Activated CD4-positive, alpha-beta T cell treated with anti-CD3 and anti-CD28 coated beads for 36 hours (primary cell): ENCODE measurements at regions of chr11 and their contacts with region 1.

Region 1: GRCh38 chr11:61695917-61696316 is 15.7 kb downstream of the DAGLA start:
- DNase-seq: peak; percentile 97
- ATAC-seq: peak; percentile 100
- H3K4me3 Mint-ChIP-seq: peak overlapping the region; percentile 21
- H3K27ac Mint-ChIP-seq: peak overlapping the region; percentile 86
- H3K4me1 Mint-ChIP-seq: peaks cover 27% of the 10 kb centered on the region
- H3K27me3 Mint-ChIP-seq: no peaks in the 10 kb centered on the region

Region 2: GRCh38 chr11:61567286-61568061 is 128.4 kb before region 1 on chr11:
- CTCF ChIA-PET with region 1: no interaction called
- POLR2A ChIA-PET with region 1: no interaction called
- intact Hi-C with region 1: no loop called
- DNase-seq: peak; percentile 86
- ATAC-seq: peak; percentile 91
- H3K4me3 Mint-ChIP-seq: no peak overlapping the region
- H3K27ac Mint-ChIP-seq: no peak overlapping the region
- H3K4me1 Mint-ChIP-seq: no peaks in the 10 kb centered on the region
- H3K27me3 Mint-ChIP-seq: peaks cover 37% of the 10 kb centered on the region

Region 3: GRCh38 chr11:61581030-61581928 is 114.6 kb before region 1 on chr11 and contains the start of gene SYT7:
- CTCF ChIA-PET with region 1: no interaction called
- POLR2A ChIA-PET with region 1: no interaction called
- intact Hi-C with region 1: no loop called
- DNase-seq: peak; percentile 97
- ATAC-seq: peak; percentile 91
- H3K4me3 Mint-ChIP-seq: peak within 1 kb of the TSS; percentile 64
- H3K27ac Mint-ChIP-seq: no peak within 1 kb of the TSS
- H3K4me1 Mint-ChIP-seq: peaks cover 12% of the 10 kb centered on the region
- H3K27me3 Mint-ChIP-seq: peaks cover 35% of the 10 kb centered on the region
- total RNA-seq, gene SYT7: 0.04 TPM in 1 of 2 experiments, not detected in the other

Region 4: DNA sequence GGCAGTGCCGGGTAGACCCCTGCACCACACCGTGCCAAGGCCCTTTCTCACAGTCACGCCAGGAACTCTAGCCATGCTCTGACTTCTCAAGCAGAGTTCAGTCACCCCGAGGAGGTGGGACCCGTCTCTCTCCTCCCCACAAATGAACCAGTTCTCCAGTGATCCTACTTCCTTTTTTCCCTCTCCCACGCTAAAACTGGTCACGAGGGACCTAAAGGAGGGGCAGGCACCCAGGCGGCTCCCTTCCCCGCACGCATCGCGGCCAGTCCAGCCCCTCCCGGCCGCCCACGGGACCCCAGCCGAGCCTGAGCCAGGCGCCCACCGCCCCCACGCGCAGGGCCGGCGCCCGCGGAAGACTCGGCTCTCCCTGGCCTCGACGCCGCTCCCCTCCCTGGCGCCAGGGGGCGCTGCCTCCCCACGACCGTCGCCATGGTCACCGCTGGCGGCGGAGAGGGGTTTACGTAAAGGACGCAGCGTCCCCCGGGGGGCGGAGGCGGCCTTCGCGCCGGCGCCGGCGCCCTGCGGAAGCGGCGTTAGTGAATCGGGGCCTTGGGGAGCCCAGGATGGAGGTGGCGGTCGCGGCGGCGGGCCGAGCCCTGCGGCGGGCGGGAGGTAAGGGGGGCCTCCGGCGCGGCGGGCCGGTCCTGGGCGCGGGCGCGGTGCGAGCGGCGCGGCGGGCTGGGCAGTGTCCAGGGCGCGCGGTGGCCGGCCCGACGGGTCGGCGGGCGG is 15.9 kb before region 1 on chr11 and contains the start of gene DAGLA:
- CTCF ChIA-PET with region 1: interaction called, 5 read pairs
- POLR2A ChIA-PET with region 1: interaction called, 5 read pairs
- intact Hi-C with region 1: loop called in 1 of 2 experiments (anchors 1 kb)
- DNase-seq: peak; percentile 86
- ATAC-seq: peak; percentile 86
- H3K4me3 Mint-ChIP-seq: peak within 1 kb of the TSS; percentile 61
- H3K27ac Mint-ChIP-seq: no peak within 1 kb of the TSS
- H3K4me1 Mint-ChIP-seq: peaks cover 4% of the 10 kb centered on the region
- H3K27me3 Mint-ChIP-seq: peaks cover 18% of the 10 kb centered on the region
- total RNA-seq, gene DAGLA: 0.09 to 0.14 TPM

Region 5: GRCh38 chr11:61733120-61733978 is 37.4 kb after region 1 on chr11:
- CTCF ChIA-PET with region 1: interaction called, 15 read pairs
- POLR2A ChIA-PET with region 1: no interaction called
- intact Hi-C with region 1: loop called (anchors 1 to 5 kb)
- DNase-seq: peak; percentile 92
- ATAC-seq: peak; percentile 95
- H3K4me3 Mint-ChIP-seq: no peak overlapping the region
- H3K27ac Mint-ChIP-seq: no peak overlapping the region
- H3K4me1 Mint-ChIP-seq: peaks cover 2% of the 10 kb centered on the region
- H3K27me3 Mint-ChIP-seq: no peaks in the 10 kb centered on the region

Region 6: DNA sequence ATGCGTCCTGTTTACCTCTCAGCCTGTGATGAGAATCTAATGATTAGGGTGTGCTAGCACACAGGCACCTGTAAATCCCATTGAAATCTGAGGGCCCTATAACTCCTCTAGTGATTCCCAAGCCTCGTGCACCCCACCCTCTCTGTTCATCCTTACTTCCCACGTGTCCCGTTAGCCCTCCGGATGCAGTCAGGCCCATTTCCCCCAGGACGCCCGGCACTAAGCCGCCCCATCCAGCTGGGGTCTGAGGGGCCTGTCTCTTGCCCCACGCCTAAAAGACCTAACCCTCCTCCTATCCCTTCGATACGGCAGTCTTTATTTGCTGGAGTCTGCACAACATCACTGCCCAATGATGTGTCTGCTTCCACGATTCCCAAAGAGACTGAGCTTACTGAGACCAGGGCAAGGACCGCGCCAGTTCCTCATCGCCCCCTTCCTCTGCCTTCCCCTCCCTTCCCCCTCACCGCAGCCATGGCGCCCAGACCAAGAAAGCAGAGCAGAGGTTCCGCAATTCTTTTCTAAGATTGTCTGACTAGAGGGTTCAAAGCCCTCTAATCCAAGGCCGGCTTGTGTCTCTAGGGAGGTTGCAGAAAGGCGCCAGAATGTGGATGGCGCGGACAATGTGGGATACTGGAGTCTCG is 131.1 kb after region 1 on chr11:
- CTCF ChIA-PET with region 1: no interaction called
- POLR2A ChIA-PET with region 1: no interaction called
- intact Hi-C with region 1: no loop called
- DNase-seq: peak; percentile 26
- ATAC-seq: no peak
- H3K4me3 Mint-ChIP-seq: peak overlapping the region; percentile 84
- H3K27ac Mint-ChIP-seq: peak overlapping the region; percentile 63
- H3K4me1 Mint-ChIP-seq: peaks cover 12% of the 10 kb centered on the region
- H3K27me3 Mint-ChIP-seq: peaks cover 37% of the 10 kb centered on the region